Activated B cell treated with CpG ODN at 0.5 μM for 24 hours (primary cell): ENCODE measurements at regions of chr22 and their contacts with region 1.

Region 1: DNA sequence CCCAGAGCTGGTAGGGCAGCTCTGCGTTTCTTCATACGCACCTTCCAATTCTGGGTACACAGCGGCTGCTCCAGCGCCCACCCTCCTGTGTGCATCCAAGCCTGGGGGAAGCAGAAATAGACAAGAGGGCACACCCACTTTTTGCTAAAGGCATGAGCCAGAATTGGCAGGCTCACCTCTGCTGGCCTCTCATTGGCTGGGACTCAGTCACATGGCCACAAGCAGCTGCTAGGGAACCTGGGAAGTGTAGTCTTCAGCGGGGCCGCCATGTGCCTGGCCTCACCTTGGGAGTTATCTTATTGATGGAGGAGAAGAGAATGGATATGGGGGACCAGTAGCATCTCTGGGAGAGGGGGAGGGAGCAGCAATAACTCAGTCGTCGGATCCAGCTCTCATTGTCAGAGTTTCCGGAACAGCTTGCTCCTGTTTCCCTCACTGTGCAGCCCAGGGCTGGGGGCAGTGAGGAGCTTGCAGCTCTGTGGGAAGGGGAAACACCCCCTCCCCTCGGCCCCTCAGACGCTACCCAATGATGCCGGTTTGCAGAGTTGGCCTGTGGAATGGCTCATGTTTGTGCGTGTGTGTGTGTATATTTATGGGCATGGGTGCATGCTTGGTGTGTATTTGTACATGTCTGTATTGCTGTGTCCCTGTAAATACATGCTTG is 11.8 kb upstream of the MIEF1 start:
- DNase-seq: peak; percentile 55
- ATAC-seq: peak; percentile 99
- H3K4me3 Mint-ChIP-seq: peak overlapping the region; percentile 17
- H3K27ac Mint-ChIP-seq: peak overlapping the region; percentile 13
- H3K4me1 Mint-ChIP-seq: peaks cover 23% of the 10 kb centered on the region
- H3K27me3 Mint-ChIP-seq: no peaks in the 10 kb centered on the region
- CTCF ChIP-seq: no peak

Region 2: DNA sequence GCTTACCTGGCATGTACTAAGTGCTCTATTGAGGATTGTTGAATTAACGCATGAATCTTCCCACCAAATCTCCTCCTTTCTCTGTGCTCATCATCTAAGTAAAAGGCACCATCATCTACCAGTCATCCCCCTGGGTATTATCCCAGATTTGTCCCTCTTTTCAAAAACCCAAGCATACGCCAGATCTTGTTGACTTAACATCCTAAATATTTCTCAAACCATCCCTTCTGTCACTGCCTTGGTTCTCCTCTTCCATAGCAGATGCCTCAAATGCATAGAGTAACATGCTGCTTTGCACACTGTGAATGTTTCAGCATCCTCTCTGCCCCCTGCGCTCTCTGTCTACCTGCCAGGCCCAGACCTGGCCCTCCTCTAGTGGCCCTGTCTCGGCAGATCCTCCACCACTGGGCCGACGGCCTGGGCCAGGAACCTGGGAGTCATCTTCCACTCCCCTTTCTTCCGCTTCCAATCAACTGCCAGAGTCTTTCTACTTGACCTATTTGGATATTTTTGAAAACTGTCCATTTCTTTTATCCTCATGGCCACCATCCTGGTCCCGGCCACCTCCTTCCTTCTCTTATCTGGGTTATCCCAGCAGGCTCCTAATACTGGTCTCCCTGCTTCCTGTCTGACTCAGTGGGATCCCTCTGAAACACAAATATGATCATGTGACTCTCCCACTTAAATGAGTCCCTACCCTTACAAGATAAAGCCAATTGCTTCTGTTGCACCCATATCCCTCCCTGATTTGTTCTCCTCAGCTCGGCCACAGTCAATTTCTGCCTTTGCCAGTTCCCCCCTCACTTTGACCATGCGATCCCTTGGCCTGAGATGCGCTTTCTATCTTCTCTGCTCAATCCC is 94.1 kb before region 1 on chr22:
- CTCF ChIA-PET with region 1: interaction called, 13 read pairs
- POLR2A ChIA-PET with region 1: interaction called, 3 read pairs
- intact Hi-C with region 1: loop called (anchors 2 kb)
- DNase-seq: no peak
- ATAC-seq: no peak
- H3K4me3 Mint-ChIP-seq: no peak overlapping the region
- H3K27ac Mint-ChIP-seq: no peak overlapping the region
- H3K4me1 Mint-ChIP-seq: peaks cover 10% of the 10 kb centered on the region
- H3K27me3 Mint-ChIP-seq: no peaks in the 10 kb centered on the region
- CTCF ChIP-seq: no peak

Region 3: GRCh38 chr22:39439170-39439569 is 51.1 kb before region 1 on chr22:
- CTCF ChIA-PET with region 1: interaction called, 12 read pairs
- POLR2A ChIA-PET with region 1: interaction called, 8 read pairs
- intact Hi-C with region 1: loop called (anchors 1 kb)
- DNase-seq: no peak
- ATAC-seq: no peak
- H3K4me3 Mint-ChIP-seq: peak overlapping the region; percentile 22
- H3K27ac Mint-ChIP-seq: no peak overlapping the region
- H3K4me1 Mint-ChIP-seq: peaks cover 56% of the 10 kb centered on the region
- H3K27me3 Mint-ChIP-seq: no peaks in the 10 kb centered on the region
- CTCF ChIP-seq: no peak

Region 4: DNA sequence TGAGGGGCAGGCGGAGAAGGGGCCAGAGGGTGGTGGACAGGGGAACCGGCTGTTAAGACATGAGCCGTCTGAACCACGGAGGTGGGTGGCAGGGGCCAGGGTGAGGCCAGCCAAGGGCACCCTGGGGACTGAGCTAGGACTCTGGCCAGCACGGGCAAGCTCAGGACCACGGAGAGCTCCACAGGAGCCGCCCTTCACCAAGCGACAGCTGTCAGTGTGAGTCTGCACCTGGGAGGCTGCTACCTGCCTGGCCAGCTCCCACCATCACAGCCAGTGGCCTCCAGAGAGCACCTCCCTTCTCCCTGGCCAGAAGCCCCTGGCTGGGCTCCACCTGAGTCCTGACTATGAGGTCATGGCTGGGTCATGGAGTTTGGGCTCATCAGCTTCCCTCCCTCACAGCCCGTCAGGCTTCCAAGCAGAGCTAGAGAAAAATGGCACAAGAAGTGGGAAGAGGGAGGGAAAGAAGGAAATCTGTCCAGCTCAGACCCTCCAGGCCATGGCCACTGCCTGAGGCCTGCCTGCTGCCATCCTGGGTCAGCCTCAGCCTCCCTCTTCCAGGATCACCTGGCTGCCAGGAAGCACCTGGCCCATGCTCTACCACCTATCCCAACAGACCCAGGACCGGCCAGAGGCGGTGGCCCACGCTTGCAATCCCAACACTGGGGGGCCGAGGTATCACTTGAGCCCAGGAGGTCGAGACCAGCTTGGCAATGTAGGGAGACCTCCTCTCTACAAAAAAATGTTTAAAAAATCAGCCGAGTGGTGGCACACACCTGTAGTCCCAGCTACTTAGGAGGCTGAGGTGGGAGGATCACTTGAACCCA is 11.6 kb before region 1 on chr22:
- CTCF ChIA-PET with region 1: interaction called, 12 read pairs
- POLR2A ChIA-PET with region 1: interaction called, 8 read pairs
- intact Hi-C with region 1: no loop called
- DNase-seq: no peak
- ATAC-seq: no peak
- H3K4me3 Mint-ChIP-seq: no peak overlapping the region
- H3K27ac Mint-ChIP-seq: no peak overlapping the region
- H3K4me1 Mint-ChIP-seq: peaks cover 4% of the 10 kb centered on the region
- H3K27me3 Mint-ChIP-seq: no peaks in the 10 kb centered on the region
- CTCF ChIP-seq: no peak

Region 5: DNA sequence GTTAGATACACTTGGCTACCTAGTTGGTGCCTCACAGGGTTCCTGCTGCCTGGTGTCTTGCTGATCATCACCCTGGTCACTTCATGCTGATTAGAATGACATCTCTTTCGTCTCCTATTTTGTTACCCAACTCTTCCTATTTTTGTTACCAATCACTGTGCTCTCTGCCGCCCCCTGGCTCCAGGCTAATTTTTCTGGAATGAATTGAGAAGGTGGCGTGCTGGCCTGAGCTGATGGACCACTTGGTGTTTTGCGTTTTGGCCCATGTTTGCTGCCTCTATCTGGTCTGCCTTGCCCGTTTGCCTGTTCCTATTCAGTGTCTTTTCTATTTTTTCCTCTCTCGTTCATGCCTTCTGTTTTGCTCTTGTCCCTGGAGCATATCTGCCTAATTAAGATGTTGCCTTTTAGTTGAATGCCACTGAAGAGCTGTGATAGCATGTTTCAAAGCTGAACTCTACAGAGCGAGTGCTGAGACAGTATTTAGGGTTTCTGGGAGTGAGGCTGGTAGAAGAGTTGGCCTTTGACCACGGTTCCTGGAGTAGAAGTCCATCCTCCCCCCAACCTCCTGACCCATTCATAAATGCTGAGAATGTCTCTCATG is 24.2 kb after region 1 on chr22:
- CTCF ChIA-PET with region 1: interaction called, 9 read pairs
- POLR2A ChIA-PET with region 1: interaction called, 11 read pairs
- intact Hi-C with region 1: loop called (anchors 2 kb)
- DNase-seq: no peak
- ATAC-seq: peak; percentile 45
- H3K4me3 Mint-ChIP-seq: no peak overlapping the region
- H3K27ac Mint-ChIP-seq: peak overlapping the region; percentile 24
- H3K4me1 Mint-ChIP-seq: peaks cover 28% of the 10 kb centered on the region
- H3K27me3 Mint-ChIP-seq: no peaks in the 10 kb centered on the region
- CTCF ChIP-seq: no peak